ENCODE measurements at regions of chr21 and their contacts with region 1.

Region 1: GRCh38 chr21:45880097-45881068 is 101.2 kb upstream of the COL6A1 start:
- DNase-seq: peak; percentile 74
- CTCF ChIP-seq: peak; percentile 53

Region 2: DNA sequence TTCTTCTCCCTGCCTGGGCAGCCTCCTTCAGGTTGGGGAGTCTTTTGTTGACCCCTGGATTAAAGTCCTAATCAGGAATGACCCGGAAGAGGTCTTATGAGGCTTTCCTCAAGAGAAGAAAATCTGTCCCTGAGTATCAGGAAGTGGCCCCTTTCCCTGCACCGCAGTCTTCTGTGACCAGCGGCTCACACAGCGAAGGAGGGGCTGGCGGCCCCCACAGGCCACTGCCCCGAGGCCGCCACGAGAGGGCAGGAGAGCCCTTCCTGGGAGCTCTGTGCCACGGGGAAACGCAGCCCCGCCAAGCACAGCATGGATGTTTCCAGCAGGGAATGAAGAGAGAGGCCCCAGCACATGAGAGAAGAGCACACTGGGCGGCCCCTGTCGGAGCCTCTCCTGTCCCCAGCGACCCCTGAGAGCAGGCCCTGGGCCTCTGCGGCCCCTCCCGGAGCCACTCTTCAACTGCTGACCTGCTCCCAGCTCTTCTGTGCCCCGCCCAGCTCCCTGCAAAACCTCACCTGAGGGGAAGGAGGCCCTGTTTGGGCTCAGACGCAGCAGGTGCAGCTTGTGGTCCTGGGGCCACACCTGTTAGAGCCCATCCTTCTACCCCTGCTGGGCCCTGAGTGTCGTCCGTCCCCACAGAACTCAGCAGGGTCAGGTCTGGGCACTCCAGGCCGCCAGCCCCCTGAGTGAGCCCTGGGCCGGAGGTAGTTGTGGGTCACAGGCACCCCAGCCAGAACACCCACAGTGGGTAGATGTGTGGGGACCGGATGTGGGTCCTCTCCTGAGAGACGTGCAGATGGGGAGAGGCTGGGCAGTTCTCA is 587.8 kb before region 1 on chr21:
- CTCF ChIA-PET with region 1: interaction called, 10 read pairs
- POLR2A ChIA-PET with region 1: no interaction called
- DNase-seq: peak; percentile 84
- CTCF ChIP-seq: peak; percentile 93

Region 3: GRCh38 chr21:45788637-45789506 is 91.5 kb before region 1 on chr21:
- CTCF ChIA-PET with region 1: no interaction called
- POLR2A ChIA-PET with region 1: no interaction called
- DNase-seq: no peak
- CTCF ChIP-seq: no peak

Region 4: DNA sequence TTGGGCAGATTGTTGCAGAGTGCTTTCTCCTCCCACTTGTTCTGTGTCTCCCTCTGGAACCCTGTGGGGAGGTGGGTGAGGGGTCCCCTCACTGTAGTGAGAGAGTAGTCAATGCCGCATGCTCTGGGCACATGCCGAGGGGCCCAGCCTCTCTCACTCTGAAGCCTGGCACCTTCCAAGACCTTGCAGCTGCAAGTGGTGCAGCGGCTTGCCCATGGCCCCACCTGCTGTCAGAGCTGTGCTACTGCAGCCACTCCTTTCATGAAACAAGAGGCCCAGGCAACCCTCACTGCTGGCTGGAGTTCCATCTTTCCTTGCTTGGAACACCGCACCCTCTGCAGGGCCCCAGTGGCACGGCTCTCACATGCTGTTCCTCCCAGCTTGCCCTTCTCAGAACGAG is 42.8 kb after region 1 on chr21:
- CTCF ChIA-PET with region 1: no interaction called
- POLR2A ChIA-PET with region 1: no interaction called
- DNase-seq: no peak
- CTCF ChIP-seq: peak; percentile 6

Region 5: DNA sequence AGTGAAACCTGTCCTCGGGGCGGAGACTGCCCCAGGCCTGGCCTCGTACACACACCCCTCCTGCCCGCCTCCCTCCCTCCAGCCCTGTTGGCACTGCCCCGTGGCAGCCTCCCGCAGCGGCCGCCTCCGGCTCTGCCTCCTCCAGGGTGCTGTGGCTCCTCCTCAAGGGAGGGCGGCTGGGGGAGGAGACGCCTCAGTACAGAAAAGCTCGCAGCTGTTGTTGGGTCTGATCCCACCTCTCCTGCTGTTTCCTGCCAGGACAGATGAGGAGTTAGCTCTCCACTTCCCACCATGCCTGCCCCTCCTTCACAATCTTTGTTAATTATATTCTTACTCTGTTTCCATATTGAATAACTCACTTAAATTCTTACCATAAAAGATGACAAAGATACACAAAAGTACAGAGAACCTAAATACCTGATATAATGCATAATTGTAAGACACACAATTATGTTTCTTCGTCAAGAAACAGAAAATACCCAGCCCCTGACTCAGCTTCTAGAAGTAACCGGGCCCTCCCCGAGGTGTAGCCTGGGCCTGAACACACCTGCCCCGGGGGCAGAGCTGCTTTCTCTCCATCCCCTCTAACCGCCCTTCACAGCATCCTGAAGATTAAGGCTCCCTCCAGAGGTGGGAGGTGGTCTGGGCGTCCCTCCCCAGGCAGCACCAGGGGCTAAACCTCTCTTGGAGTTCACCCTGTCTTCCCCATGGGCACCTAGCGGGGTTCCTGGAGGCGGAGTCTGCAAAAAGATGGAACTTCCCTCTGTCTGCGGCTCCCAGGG is 70.5 kb after region 1 on chr21:
- CTCF ChIA-PET with region 1: no interaction called
- POLR2A ChIA-PET with region 1: no interaction called
- DNase-seq: no peak
- CTCF ChIP-seq: no peak

Measured in GM10248 (cell line).